RWPE1 (cell line): ENCODE measurements at regions of chr15 and their contacts with region 1.

Region 1: DNA sequence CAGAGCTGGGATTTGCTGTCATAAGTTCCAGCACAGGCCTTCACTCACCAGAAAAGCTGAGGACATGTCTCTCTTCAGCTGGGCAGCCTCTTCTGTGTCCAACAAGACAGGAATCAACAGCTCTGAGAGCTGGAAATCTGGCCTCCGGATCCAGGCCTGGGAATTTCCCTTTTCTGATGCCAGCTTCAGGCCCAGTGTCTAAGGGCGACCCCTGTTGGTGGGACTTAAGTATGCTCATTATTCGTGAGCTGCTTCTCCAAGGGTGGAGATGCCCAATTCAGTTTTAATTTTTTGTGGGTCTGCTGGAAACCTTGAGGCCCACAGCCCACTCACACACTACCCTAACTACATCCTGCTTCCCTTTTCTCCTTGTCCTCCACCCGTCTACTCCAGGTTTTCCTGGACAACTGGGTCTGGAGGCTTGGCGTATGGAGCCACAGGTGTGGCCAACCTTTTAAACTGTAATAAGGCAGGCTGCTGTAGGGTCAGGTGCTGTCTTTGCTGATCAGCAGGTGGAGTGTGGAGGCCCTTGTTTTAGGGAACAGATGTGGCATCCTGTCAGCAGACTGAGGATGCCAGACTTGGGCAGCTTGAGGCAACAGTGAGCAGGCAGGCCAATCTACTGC is 2.6 kb upstream of the CEMIP start:
- DNase-seq: no peak
- H3K27ac ChIP-seq: peak overlapping the region; percentile 68
- CTCF ChIP-seq: peak; percentile 36; the same call in 1 of the 2 replicates

Region 2: GRCh38 chr15:80674245-80674614 is 102.3 kb before region 1 on chr15:
- CTCF ChIA-PET with region 1: no interaction called
- POLR2A ChIA-PET with region 1: no interaction called
- DNase-seq: no peak
- H3K27ac ChIP-seq: no peak overlapping the region
- CTCF ChIP-seq: no peak

Region 3: DNA sequence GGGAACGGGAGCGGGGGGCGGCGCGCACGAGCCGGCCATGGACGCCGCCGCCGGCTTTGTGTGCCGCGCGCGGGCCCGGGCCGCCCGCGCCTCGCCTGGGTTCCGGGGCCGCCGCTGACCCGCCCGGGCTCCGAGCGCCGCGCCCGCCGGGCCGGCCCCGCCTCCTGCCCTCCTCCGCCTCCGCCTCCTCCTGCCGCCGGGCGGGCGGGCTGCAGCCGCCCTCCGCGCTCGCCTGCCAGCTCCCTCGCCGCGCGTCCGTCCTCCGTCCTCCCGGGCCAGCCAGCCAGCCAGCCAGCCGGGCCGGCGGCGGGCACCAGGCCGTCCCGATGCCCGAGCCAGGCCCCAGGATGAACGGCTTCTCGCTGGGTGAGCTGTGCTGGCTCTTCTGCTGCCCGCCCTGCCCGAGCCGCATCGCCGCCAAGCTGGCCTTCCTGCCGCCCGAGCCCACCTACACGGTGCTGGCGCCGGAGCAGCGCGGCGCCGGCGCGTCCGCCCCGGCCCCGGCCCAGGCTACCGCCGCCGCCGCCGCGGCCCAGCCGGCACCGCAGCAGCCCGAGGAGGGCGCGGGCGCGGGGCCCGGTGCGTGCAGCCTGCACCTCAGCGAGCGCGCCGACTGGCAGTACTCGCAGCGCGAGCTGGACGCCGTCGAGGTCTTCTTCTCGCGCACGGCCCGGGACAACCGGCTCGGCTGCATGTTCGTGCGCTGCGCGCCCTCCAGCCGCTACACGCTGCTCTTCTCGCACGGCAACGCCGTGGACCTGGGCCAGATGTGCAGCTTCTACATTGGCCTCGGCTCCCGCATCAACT is 81.2 kb before region 1 on chr15 and contains the start of gene ABHD17C:
- CTCF ChIA-PET with region 1: interaction called, 25 read pairs
- POLR2A ChIA-PET with region 1: interaction called, 3 read pairs
- DNase-seq: peak; percentile 74
- H3K27ac ChIP-seq: peak within 1 kb of the TSS; percentile 89
- CTCF ChIP-seq: no peak

Region 4: DNA sequence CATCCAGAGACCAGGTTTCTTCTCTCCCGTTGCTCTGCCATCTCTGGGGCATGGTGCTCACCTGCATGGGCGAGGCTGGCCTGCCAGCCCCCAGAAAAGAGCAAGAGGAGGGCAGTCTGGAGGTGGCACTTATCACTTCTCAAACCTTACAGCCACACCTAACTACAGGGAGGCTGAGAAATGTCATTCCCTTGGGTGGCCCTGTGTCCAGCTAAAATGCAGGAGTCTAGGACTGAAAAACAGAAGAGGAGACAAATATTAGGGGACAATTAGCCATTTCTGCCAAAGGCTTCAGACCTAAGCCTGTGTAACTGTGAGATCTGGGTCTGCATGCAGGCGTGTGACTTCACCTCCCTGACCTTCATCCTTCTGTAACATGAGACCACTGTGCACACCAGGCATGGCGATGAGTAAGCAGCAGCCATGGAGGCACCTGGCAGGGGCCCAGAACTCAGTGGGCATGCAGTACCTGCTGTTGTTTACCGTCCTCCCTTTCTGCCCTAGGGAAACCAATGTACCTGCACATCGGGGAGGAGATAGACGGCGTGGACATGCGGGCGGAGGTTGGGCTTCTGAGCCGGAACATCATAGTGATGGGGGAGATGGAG is 129.7 kb after region 1 on chr15:
- CTCF ChIA-PET with region 1: no interaction called
- POLR2A ChIA-PET with region 1: no interaction called
- DNase-seq: peak; percentile 62
- H3K27ac ChIP-seq: no peak overlapping the region
- CTCF ChIP-seq: no peak

Region 5: DNA sequence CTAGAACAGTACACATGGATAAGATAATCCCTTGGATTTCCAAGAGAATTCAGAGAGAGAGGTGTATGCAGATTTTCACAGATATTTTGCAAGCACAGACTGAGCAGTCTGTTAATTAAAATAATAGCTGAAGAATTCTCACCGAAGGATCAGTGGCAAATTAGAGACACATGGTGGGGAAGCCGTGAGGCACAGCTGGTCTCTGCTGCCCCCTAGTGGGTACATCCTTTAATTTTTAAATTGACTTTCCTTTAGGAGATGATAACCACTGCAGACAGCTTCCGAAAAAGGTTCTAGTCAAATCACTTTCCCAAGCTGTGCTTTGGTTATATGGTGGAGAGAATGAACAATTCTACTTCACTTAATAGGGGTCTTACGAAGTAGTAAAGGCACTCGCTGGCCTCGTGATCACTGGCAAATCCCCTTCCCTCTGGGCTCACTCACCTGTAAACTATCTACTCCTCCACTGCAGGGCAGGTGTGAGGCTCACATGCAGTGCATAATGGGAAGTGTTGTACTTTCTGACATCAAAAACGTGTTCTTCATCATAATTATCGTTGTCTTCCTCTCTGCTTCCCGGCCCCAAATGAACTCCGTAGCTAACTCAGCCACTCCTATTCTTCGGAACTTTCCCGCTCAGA is 193.6 kb after region 1 on chr15:
- CTCF ChIA-PET with region 1: interaction called, 30 read pairs
- POLR2A ChIA-PET with region 1: no interaction called
- DNase-seq: peak; percentile 70
- H3K27ac ChIP-seq: no peak overlapping the region
- CTCF ChIP-seq: peak; percentile 94